PC-9 (cell line): ENCODE measurements at regions of chr1 and their contacts with region 1.

Region 1: DNA sequence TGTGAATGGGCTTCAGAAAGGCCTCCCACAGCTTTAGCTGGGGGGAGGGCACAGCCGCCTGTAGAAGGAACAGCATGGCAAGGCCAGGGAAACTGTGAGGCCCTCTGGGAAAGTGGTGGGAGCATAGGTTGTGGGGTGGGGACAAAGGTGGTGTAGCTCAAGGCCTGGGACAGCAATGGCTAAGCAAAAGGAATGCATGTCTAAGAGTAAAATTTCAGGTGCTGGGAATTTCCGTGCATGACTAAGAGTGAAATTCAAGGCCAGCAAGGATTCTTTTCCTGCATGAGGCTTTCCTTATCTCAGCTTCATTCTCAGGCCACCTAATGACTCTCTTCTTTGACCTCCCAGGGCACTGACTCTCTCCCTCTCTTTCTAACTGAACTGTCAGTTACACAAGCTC is 86.5 kb upstream of the WNT4 start:
- DNase-seq: peak; percentile 47 to 94
- H3K4me3 ChIP-seq: no peak overlapping the region
- H3K27ac ChIP-seq: peak overlapping the region; percentile 99
- H3K4me1 ChIP-seq: peaks cover 34% of the 10 kb centered on the region
- H3K27me3 ChIP-seq: no peaks in the 10 kb centered on the region
- CTCF ChIP-seq: no peak

Region 2: GRCh38 chr1:22064751-22065402 is 164.5 kb before region 1 on chr1:
- CTCF ChIA-PET with region 1: no interaction called
- POLR2A ChIA-PET with region 1: interaction called, 13 read pairs
- intact Hi-C with region 1: no loop called
- DNase-seq: no peak
- H3K4me3 ChIP-seq: no peak overlapping the region
- H3K27ac ChIP-seq: no peak overlapping the region
- H3K4me1 ChIP-seq: no peaks in the 10 kb centered on the region
- H3K27me3 ChIP-seq: no peaks in the 10 kb centered on the region
- CTCF ChIP-seq: no peak

Region 3: DNA sequence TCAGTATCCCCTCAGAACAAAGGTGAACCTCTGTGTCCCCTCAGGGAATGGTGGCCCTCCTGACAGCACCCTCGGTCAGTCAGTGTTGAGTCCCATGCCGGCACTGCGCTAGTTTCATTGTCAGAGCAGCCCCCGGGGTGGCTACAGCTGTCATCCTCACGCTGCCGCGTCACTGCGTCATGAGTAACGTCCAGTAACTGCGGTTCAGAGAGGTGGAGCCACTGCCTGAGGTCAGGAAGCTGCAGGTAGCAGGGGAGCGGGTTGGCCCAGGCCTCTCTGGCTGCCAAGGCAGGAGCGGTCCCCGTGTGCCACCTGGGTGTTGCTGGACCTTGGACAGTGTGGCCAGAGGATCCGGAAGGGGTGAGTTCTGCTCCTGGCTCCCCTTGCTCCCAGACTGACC is 66.2 kb before region 1 on chr1:
- CTCF ChIA-PET with region 1: no interaction called
- POLR2A ChIA-PET with region 1: no interaction called
- intact Hi-C with region 1: loop called (anchors 1 kb)
- DNase-seq: peak; percentile 57 to 67
- H3K4me3 ChIP-seq: peak overlapping the region; percentile 26; the same call in 1 of the 2 replicates
- H3K27ac ChIP-seq: no peak overlapping the region
- H3K4me1 ChIP-seq: no peaks in the 10 kb centered on the region
- H3K27me3 ChIP-seq: no peaks in the 10 kb centered on the region
- CTCF ChIP-seq: no peak

Region 4: GRCh38 chr1:22259551-22260282 is 30.3 kb after region 1 on chr1:
- CTCF ChIA-PET with region 1: no interaction called
- POLR2A ChIA-PET with region 1: no interaction called
- intact Hi-C with region 1: no loop called
- DNase-seq: peak; percentile 43 to 83
- H3K4me3 ChIP-seq: peak overlapping the region; percentile 14; the same call in 1 of the 2 replicates
- H3K27ac ChIP-seq: peak overlapping the region; percentile 89
- H3K4me1 ChIP-seq: peaks cover 56% of the 10 kb centered on the region
- H3K27me3 ChIP-seq: no peaks in the 10 kb centered on the region
- CTCF ChIP-seq: no peak